PC-3 (cell line): ENCODE measurements at regions of chrX and their contacts with region 1.

Region 1: GRCh38 chrX:132676561-132677186 is 187.8 kb upstream of the MBNL3 start:
- DNase-seq: peak; percentile 33
- ATAC-seq: no peak
- H3K4me3 ChIP-seq: no peak overlapping the region
- H3K27ac ChIP-seq: no peak overlapping the region
- H3K4me1 ChIP-seq: no peaks in the 10 kb centered on the region
- H3K27me3 ChIP-seq: no peaks in the 10 kb centered on the region
- CTCF ChIP-seq: peak; percentile 41

Region 2: DNA sequence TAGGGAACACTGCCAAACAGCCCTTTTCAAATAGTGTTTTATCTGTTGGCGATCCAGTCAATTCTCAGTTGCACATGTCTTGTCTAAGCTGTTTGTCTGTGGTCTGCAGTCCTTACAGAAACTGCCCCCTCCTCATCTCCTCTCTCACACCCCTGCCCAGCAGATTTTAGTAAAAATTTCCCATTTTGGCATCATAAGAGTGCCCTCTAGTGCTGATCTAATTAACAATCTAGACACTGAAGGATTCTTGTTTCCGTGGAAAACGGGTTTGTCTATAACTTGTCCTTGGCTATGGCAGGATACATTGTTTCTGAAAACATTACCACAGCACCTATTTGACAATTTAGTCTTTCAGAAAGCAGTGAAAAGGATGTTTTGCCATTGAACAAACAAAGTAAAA is 39.3 kb after region 1 on chrX:
- CTCF ChIA-PET with region 1: no interaction called
- POLR2A ChIA-PET with region 1: no interaction called
- intact Hi-C with region 1: loop called (anchors 2 kb)
- DNase-seq: peak; percentile 10
- ATAC-seq: peak; percentile 33; the same call in 1 of the 2 replicates
- H3K4me3 ChIP-seq: no peak overlapping the region
- H3K27ac ChIP-seq: no peak overlapping the region
- H3K4me1 ChIP-seq: no peaks in the 10 kb centered on the region
- H3K27me3 ChIP-seq: no peaks in the 10 kb centered on the region
- CTCF ChIP-seq: peak; percentile 67

Region 3: GRCh38 chrX:132957211-132958090 is 280.8 kb after region 1 on chrX:
- CTCF ChIA-PET with region 1: interaction called, 3 read pairs
- POLR2A ChIA-PET with region 1: no interaction called
- intact Hi-C with region 1: loop called (anchors 5 kb)
- DNase-seq: no peak
- ATAC-seq: peak; percentile 25
- H3K4me3 ChIP-seq: peak overlapping the region; percentile 71
- H3K27ac ChIP-seq: no peak overlapping the region
- H3K4me1 ChIP-seq: peaks cover 54% of the 10 kb centered on the region
- H3K27me3 ChIP-seq: no peaks in the 10 kb centered on the region
- CTCF ChIP-seq: no peak